Left lung (tissue), 14 donors: ENCODE measurements at regions of chr19 and their contacts with region 1.

Region 1: DNA sequence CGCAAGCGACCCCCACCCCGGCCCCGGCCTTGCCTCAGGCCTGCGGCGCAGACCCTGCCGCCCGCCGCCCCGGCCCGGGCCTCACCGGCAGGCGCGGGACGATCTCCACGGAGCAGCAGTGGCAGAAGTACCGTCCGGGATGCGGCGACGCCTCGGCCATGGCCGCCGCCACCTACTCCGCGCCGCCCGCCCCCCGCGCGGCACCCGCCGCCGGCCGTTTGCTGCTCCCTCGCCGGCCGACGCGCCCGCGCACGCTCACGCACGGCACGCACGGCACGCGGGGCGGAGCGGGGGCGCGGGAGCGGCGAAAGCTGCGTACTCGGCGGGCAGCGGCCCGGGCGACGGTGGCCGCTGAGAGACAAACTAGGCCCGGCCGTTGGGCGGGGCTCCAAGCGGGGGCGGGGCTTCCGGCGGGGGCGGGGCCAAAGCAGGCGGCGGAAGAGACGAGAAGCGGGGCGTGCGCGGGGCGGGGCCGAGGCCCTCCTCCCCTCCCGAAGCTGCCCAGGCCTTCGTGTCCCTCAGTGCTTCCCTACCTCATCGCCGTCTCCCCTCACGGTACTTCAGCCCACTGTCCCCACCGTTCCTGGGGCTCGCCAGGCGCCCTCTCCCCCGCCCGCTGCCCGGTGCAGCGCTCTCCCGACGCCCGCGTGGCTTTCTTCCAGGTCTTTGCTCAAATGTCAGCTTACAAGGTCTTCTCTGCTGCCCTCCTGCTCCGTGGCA is at the start of gene RNF126:
- DNase-seq: peak; percentile 83 to 97 (median 90)
- ATAC-seq: peak; percentile 87
- H3K4me3 ChIP-seq: peak within 1 kb of the TSS; percentile 97 to 99
- H3K27ac ChIP-seq: peak within 1 kb of the TSS; percentile 91 to 92
- H3K4me1 ChIP-seq: peaks cover 34 to 69% of the 10 kb centered on the region in 2 donors
- H3K27me3 ChIP-seq: no peaks in the 10 kb centered on the region
- CTCF ChIP-seq: no peak
- polyA plus RNA-seq, gene RNF126: 15.4 to 27.2 (median 21.1) TPM

Region 2: GRCh38 chr19:572140-572742 is 90.9 kb before region 1 on chr19 and contains the start of gene BSG:
- intact Hi-C with region 1: no loop called
- DNase-seq: peak; percentile 98 to 100 (median 99)
- ATAC-seq: peak; percentile 85
- H3K4me3 ChIP-seq: peak within 1 kb of the TSS; percentile 87 to 95
- H3K27ac ChIP-seq: peak within 1 kb of the TSS; percentile 91 to 93
- H3K4me1 ChIP-seq: peaks cover 16 to 48% of the 10 kb centered on the region in 2 donors
- H3K27me3 ChIP-seq: no peaks in the 10 kb centered on the region
- CTCF ChIP-seq: peak in 1 of 2 donors; percentile 30
- polyA plus RNA-seq, gene BSG: 259 to 372 (median 302) TPM

Region 3: GRCh38 chr19:737581-738093 is 74.5 kb after region 1 on chr19:
- intact Hi-C with region 1: loop called (anchors 2 to 10 kb)
- DNase-seq: peak in 1 of 4 donors; percentile 82
- ATAC-seq: peak; percentile 73
- H3K4me3 ChIP-seq: no peak overlapping the region
- H3K27ac ChIP-seq: no peak overlapping the region
- H3K4me1 ChIP-seq: peaks cover 0 to 7% of the 10 kb centered on the region in 2 donors
- H3K27me3 ChIP-seq: no peaks in the 10 kb centered on the region
- CTCF ChIP-seq: peak; percentile 27 to 52